Activated T-helper 1 cell treated with anti-CD3 and anti-CD28 coated beads, Interleukin-12 subunit alpha, Interleukin-12 subunit beta, Interleukin-2, Interleukin-4 antibody, amounts not matched to agents 30 ng/mL and 10 ng/mL and 1 ng/mL, durations not matched to agents 14 hours and 24 hours and 36 hours (primary cell): ENCODE measurements at regions of chr15 and their contacts with region 1.

Region 1: DNA sequence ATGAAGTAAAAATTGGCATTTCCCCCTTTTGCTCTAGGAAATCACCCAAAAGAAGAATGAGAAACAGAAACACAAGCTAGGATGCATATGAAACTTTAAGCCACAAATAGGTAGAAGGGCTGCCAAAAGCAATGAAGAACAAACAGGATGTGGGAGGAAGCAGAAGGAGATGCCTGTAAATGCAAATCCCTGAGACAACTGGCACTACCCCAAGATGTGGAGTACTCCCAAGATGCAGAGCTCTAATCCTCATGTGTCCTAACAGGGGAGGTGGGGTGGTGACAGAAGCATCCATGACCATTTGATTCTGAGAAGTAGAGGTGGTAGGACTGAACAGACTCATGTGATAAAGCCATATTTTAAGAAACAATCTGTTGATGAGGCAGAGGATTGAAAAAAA is 31.9 kb upstream of the ZNF280D start:
- DNase-seq: peak; percentile 10
- H3K4me3 Mint-ChIP-seq: peak overlapping the region; percentile 16
- H3K27ac Mint-ChIP-seq: peak overlapping the region; percentile 83
- H3K4me1 Mint-ChIP-seq: peaks cover 40% of the 10 kb centered on the region
- H3K27me3 Mint-ChIP-seq: no peaks in the 10 kb centered on the region

Region 2: DNA sequence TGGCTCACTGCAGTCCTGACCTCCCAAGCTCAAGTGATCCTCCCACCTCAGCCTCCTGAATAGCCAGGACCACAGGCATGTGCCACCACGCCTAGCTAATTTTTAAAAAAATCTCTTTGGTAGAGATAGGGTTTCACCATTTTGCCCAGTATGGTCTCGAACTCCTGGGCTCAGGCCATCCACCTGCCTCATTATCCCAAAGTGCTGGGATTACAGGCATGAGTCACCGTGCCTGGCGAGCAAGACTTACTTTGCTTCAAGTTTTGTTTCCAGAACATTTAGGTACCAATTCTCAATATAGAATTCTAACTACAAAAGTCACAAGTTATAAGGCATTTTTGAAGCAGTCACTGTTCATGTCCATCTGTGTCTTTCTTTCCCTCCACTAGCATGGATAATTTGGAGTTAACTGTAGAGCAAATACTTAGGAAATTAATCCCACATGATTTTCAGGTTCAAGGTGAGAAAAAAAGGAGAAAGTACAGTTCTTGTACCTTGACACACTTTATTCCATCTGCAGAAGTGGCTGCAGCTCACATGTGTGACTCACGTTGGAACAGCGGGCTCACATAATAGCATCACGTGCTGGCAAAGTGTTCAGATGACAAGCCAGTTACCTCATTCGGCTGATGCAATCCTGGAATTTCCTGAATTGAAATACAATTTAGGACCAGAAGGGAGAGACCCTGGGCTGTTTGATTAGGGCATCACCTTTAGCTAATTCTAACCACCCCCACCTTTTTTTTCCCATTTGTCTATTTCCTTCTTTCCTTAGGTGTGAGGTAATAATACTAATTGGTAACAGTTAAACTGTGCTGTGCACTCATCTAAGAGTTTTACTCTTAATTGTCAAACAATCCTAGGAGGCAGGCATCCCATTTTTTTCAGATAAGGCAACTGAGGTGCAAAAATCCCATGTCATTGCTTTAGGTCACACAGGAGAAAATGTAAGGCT is 724.9 kb before region 1 on chr15:
- intact Hi-C with region 1: loop called (anchors 5 kb)
- DNase-seq: no peak
- H3K4me3 Mint-ChIP-seq: no peak overlapping the region
- H3K27ac Mint-ChIP-seq: no peak overlapping the region
- H3K4me1 Mint-ChIP-seq: peaks cover 39% of the 10 kb centered on the region
- H3K27me3 Mint-ChIP-seq: no peaks in the 10 kb centered on the region

Region 3: DNA sequence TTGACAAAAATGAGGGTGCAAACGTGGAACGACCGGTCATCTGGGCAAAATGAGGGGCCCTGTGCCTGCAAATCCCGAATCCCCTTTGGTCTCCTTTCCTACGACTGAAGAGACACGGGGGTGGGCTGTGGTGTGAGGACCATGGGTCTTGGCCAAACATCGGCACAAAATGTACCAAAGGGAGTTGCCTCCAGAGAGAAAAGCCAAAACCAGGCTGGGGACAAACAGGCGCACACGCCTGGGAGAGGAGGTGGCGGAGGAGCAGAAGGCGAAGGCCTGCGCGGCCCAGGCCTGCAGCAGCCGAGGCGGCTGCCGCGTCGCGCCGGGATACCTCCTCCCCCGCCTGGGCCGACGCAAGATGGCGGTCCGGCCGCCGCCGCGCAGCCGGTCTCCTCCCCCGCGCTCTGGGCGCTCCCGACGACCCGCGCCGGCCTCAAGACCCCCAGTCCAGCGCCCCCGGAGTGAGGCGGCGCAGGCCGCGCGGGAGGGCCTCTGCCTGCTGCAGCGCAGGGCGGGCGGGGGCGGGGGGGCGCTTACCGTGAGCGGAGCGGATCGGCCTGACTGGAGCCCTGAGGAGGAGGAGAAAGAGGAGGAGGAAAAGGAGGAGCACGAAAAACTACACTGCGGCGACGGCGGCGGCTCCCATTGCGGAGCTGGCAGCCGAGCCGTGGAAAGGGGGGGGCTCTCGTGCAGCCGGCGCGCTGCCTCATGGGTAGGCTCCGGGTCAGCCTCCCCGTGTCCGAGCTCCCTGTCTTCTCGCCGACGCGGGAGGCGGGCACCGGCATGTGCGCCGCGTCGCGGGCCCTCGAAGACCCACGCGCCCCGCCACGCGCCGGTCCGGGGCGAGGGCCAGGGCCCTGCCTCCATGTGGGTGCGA is 32.1 kb before region 1 on chr15 and contains the start of gene ZNF280D:
- intact Hi-C with region 1: loop called (anchors 1 kb)
- DNase-seq: peak; percentile 77
- H3K4me3 Mint-ChIP-seq: peak within 1 kb of the TSS; percentile 95
- H3K27ac Mint-ChIP-seq: peak within 1 kb of the TSS; percentile 99
- H3K4me1 Mint-ChIP-seq: peaks cover 47% of the 10 kb centered on the region
- H3K27me3 Mint-ChIP-seq: peaks cover 3% of the 10 kb centered on the region
- total RNA-seq, gene ZNF280D: 29.9 and 30.5 TPM in 2 replicates

Region 4: DNA sequence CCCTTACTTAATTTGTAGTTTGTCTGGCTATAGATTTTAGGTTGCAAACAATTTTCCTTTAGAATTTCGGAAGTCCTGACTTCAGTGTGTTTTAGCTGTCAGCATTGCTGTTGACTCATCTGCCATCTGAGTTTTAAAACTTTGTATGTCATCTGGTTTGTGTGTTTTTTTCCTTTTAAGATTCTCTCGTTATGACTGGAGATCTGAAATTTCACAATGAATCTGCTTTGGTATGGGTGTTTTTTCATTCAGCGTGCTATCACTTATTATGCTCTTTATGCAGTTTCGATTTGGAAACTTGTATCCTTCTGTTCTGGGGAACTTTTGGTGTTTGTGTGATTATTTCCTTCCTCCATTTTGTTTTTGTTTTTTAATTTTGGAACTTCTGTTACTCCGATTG is 21.7 kb after region 1 on chr15:
- intact Hi-C with region 1: loop called (anchors 1 kb)
- DNase-seq: no peak
- H3K4me3 Mint-ChIP-seq: peak overlapping the region; percentile 9
- H3K27ac Mint-ChIP-seq: peak overlapping the region; percentile 70
- H3K4me1 Mint-ChIP-seq: peaks cover 17% of the 10 kb centered on the region
- H3K27me3 Mint-ChIP-seq: no peaks in the 10 kb centered on the region

Region 5: DNA sequence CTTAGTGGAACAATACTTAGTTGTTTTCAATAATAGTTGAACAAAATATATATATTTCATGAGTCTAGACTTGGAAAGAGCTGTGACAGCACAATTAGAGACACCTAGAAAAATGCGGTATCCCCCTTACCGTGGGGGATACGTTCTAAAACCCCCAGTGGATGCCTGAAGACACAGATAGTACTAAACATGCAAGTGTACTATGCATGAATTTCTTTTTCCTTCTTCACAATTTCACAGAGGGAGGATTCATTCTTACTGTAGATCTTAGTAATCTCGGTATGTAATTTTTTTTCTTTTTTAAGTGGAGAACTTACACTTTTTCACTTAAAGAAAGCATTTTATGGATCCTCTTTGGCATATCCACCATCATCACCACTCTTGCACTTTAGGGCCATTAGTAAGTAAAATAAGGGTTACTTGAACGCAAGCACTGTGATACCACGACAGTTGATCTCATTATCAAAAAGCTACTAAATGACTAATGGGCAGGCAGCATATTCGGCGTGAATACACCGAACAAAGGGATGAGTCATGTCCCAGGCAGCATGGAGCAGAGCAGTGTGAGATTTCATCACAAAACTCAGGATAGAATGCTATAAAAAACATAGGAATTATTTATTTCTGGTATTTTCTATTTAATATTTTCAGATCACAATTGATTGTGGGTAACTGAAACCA is 40.4 kb after region 1 on chr15:
- intact Hi-C with region 1: loop called (anchors 5 kb)
- DNase-seq: no peak
- H3K4me3 Mint-ChIP-seq: no peak overlapping the region
- H3K27ac Mint-ChIP-seq: peak overlapping the region; percentile 5
- H3K4me1 Mint-ChIP-seq: no peaks in the 10 kb centered on the region
- H3K27me3 Mint-ChIP-seq: peaks cover 3% of the 10 kb centered on the region

Region 6: DNA sequence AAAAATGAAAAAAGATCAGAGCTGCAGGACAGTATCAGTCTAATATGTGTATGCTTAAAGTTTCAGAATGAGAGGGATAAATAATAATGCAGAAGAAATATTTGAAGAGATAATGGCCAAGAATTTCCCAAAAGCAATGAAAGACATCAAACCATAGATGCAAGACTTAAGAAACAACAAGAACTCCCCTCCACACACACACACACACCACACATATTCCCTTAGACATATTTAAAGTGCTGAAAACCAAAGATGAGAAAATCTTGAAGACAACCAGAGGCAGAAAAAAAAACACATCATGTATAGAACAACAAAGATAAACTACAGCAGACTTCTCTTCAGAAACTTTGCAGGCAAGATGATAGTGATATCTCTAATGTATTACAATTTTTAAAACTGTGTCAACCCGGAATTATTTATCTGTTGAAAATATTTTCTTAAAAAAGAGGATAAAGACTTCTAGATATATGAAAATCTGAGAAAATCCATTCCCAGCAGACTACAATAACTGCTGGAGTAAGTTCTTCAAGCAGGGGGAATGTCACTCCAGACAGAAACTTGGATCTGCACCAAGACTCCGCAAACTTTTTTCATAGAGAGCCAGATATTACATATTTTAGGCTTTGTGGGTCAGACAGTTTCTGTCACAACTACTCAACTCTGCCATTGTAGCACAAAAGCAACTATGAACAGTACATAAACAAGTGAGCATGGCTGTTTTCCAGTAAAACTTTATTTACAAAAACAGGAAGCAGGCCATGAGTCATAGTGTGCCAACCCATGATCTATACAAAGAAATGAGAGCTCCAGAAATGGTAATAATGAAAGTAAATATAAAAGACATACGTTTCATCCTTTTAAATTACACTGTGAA is 387.7 kb after region 1 on chr15:
- intact Hi-C with region 1: loop called (anchors 1 kb)
- DNase-seq: peak; percentile 16
- H3K4me3 Mint-ChIP-seq: peak overlapping the region; percentile 1
- H3K27ac Mint-ChIP-seq: peak overlapping the region; percentile 86
- H3K4me1 Mint-ChIP-seq: peaks cover 26% of the 10 kb centered on the region
- H3K27me3 Mint-ChIP-seq: no peaks in the 10 kb centered on the region

Region 7: DNA sequence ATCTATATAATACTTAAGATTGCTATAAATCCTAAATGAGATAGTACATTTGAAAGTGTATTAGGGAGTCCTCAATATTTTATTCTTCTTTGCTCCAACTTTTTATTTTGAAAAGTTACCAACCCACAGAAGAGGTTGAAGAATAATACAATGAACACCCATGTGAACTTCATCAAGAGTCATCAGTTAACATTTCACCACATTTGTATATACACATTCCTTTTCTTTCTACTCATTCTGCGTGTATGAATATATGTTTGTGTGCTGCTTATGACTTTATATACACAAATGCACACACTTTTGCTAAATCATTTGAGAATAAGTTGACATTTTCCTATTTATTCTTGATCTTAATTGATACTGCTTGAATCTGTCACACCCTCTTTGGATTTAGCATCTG is 417.8 kb after region 1 on chr15:
- intact Hi-C with region 1: no loop called
- DNase-seq: no peak
- H3K4me3 Mint-ChIP-seq: no peak overlapping the region
- H3K27ac Mint-ChIP-seq: no peak overlapping the region
- H3K4me1 Mint-ChIP-seq: no peaks in the 10 kb centered on the region
- H3K27me3 Mint-ChIP-seq: no peaks in the 10 kb centered on the region